Activated CD4-positive, alpha-beta memory T cell treated with anti-CD3 and anti-CD28 coated beads, Interleukin-2, amount 10 ng/mL, durations not matched to agents 7 days and 5 days (primary cell): ENCODE measurements at regions of chr10 and their contacts with region 1.

Region 1: GRCh38 chr10:103504181-103504783 is 10.8 kb downstream of the NEURL1 start:
- DNase-seq: peak; percentile 66
- H3K4me3 Mint-ChIP-seq: no peak overlapping the region
- H3K27ac Mint-ChIP-seq: peak overlapping the region; percentile 0
- H3K4me1 Mint-ChIP-seq: peaks cover 36% of the 10 kb centered on the region
- H3K27me3 Mint-ChIP-seq: peaks cover 68% of the 10 kb centered on the region

Region 2: DNA sequence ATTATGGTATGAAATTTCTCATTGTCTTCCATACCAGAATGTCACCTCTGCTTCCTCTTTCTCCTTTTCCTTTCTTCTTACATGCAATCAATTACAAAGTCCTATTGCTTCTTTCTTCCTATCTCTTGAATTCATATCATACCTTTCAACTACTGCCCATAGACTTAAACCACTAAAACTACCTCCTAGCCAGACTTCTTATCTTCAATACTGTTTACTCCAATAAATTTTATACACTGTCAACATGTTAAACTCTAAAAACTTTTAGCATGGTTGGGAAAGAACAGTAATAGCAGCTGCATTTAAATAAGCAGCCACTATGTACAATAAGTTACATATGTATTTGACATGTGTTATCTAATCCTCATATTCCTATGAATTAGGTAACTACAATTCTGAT is 188.2 kb before region 1 on chr10:
- CTCF ChIA-PET with region 1: no interaction called
- POLR2A ChIA-PET with region 1: no interaction called
- DNase-seq: no peak
- H3K4me3 Mint-ChIP-seq: no peak overlapping the region
- H3K27ac Mint-ChIP-seq: no peak overlapping the region
- H3K4me1 Mint-ChIP-seq: no peaks in the 10 kb centered on the region
- H3K27me3 Mint-ChIP-seq: no peaks in the 10 kb centered on the region

Region 3: DNA sequence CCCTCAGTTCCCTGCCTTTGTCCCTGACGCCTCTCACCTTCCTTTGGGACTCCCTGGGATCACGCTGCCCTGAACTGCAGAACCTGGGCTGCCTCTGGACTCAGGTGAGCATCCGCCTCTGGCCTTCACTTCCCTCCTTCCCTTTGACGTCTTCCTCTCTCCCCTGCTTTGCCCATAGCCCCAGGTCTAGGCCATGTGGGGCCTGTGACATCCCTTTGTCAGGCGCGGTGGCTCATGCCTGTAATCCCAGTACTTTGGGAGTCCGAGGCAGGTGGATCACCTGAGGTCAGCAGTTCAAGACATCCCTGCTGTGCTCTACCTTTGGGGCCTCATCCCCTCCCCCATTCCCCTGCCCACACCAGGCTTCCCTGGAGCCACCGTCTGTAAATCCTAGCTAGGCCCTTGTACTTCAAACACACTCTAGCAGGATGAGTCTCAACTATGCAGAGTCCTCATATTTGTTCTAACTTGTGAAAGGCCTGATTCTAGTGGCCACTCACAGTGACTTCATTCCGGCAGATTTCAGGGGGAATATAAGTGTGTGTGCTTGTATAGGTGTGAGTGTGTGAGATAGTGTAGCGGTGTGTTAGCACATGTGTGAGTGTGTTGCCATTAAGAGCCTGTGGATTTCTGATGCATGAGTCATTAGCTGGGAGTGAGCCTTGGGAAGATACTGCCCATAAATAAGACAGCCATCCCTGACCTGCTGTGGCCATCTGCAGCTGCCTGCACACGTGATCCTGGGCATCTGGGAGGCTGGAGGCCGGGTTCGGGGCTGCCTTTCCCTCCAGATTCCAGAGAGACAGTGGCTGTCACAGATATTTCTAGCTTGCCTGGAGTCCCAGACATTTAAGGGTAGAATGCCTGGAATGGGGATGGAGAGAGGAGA is 12.5 kb before region 1 on chr10:
- CTCF ChIA-PET with region 1: interaction called, 3 read pairs
- POLR2A ChIA-PET with region 1: interaction called, 13 read pairs
- DNase-seq: no peak
- H3K4me3 Mint-ChIP-seq: no peak overlapping the region
- H3K27ac Mint-ChIP-seq: no peak overlapping the region
- H3K4me1 Mint-ChIP-seq: peaks cover 22% of the 10 kb centered on the region
- H3K27me3 Mint-ChIP-seq: peaks cover 51% of the 10 kb centered on the region

Region 4: GRCh38 chr10:103554488-103555324 is 50.4 kb after region 1 on chr10:
- CTCF ChIA-PET with region 1: no interaction called
- POLR2A ChIA-PET with region 1: no interaction called
- DNase-seq: peak; percentile 23
- H3K4me3 Mint-ChIP-seq: peak overlapping the region; percentile 52
- H3K27ac Mint-ChIP-seq: no peak overlapping the region
- H3K4me1 Mint-ChIP-seq: peaks cover 13% of the 10 kb centered on the region
- H3K27me3 Mint-ChIP-seq: peaks cover 37% of the 10 kb centered on the region